CD8-positive, alpha-beta memory T cell (primary cell): ENCODE measurements at regions of chr11 and their contacts with region 1.

Region 1: GRCh38 chr11:60831143-60831500 is 10.8 kb upstream of the CCDC86 start:
- DNase-seq: peak; percentile 58 to 86 (median 71)
- H3K4me3 ChIP-seq: no peak overlapping the region
- H3K4me3 Mint-ChIP-seq: peak overlapping the region in 2 of 7 donors; percentile 54 to 83
- H3K27ac ChIP-seq: no peak overlapping the region
- H3K27ac Mint-ChIP-seq: peak overlapping the region in 3 of 8 donors; percentile 58 to 86 (median 60)
- H3K4me1 ChIP-seq: no peaks in the 10 kb centered on the region
- H3K4me1 Mint-ChIP-seq: peaks cover 0 to 3% (median 0%) of the 10 kb centered on the region in 3 donors
- H3K27me3 ChIP-seq: no peaks in the 10 kb centered on the region
- H3K27me3 Mint-ChIP-seq: peaks cover 12 to 29% of the 10 kb centered on the region in 2 donors

Region 2: DNA sequence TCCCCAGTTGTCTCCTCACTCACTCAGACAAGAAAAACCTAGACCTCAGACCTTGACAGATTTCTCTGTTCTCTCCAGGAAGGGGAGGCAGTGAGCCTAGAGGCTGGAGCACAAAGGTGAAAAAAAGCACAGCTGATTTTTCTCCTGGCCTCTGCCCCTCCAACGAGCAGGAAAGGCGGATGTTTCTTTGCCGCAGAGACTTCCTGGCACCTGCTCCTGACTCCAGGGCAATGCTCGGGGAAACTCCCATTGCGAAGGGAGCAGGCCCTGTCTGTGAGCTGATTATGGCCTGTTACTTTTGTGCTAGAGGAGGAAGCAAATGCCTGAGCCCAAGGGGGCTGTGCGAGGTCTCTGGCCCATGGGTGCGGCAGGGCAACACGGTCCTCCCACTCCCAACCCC is 20.6 kb before region 1 on chr11:
- CTCF ChIA-PET with region 1: no interaction called
- POLR2A ChIA-PET with region 1: no interaction called
- DNase-seq: no peak
- H3K4me3 ChIP-seq: no peak overlapping the region
- H3K4me3 Mint-ChIP-seq: no peak overlapping the region
- H3K27ac ChIP-seq: no peak overlapping the region
- H3K27ac Mint-ChIP-seq: no peak overlapping the region
- H3K4me1 ChIP-seq: no peaks in the 10 kb centered on the region
- H3K4me1 Mint-ChIP-seq: no peaks in the 10 kb centered on the region
- H3K27me3 ChIP-seq: no peaks in the 10 kb centered on the region
- H3K27me3 Mint-ChIP-seq: peaks cover 10 to 43% of the 10 kb centered on the region in 2 donors

Region 3: GRCh38 chr11:60860943-60861342 is 29.8 kb after region 1 on chr11:
- CTCF ChIA-PET with region 1: no interaction called
- POLR2A ChIA-PET with region 1: no interaction called
- DNase-seq: peak in 1 of 5 donors; percentile 33
- H3K4me3 ChIP-seq: no peak overlapping the region
- H3K4me3 Mint-ChIP-seq: no peak overlapping the region
- H3K27ac ChIP-seq: no peak overlapping the region
- H3K27ac Mint-ChIP-seq: peak overlapping the region in 1 of 8 donors; percentile 8
- H3K4me1 ChIP-seq: peaks cover 9% of the 10 kb centered on the region
- H3K4me1 Mint-ChIP-seq: peaks cover 14 to 39% (median 36%) of the 10 kb centered on the region in 3 donors
- H3K27me3 ChIP-seq: no peaks in the 10 kb centered on the region
- H3K27me3 Mint-ChIP-seq: no peaks in the 10 kb centered on the region

Region 4: GRCh38 chr11:60872961-60873524 is 41.9 kb after region 1 on chr11:
- CTCF ChIA-PET with region 1: interaction called, 10 read pairs
- POLR2A ChIA-PET with region 1: no interaction called
- DNase-seq: no peak
- H3K4me3 ChIP-seq: no peak overlapping the region
- H3K4me3 Mint-ChIP-seq: peak overlapping the region in 1 of 7 donors; percentile 56
- H3K27ac ChIP-seq: no peak overlapping the region
- H3K27ac Mint-ChIP-seq: peak overlapping the region in 5 of 8 donors; percentile 42 to 77 (median 51)
- H3K4me1 ChIP-seq: peaks cover 29% of the 10 kb centered on the region
- H3K4me1 Mint-ChIP-seq: peaks cover 19 to 53% (median 42%) of the 10 kb centered on the region in 3 donors
- H3K27me3 ChIP-seq: no peaks in the 10 kb centered on the region
- H3K27me3 Mint-ChIP-seq: peaks cover 1 to 8% of the 10 kb centered on the region in 2 donors

Region 5: GRCh38 chr11:60899046-60899936 is 68.2 kb after region 1 on chr11:
- CTCF ChIA-PET with region 1: interaction called, 20 read pairs
- POLR2A ChIA-PET with region 1: no interaction called
- DNase-seq: peak in 4 of 5 donors; percentile 10 to 56 (median 36)
- H3K4me3 ChIP-seq: no peak overlapping the region
- H3K4me3 Mint-ChIP-seq: peak overlapping the region in 1 of 7 donors; percentile 15
- H3K27ac ChIP-seq: no peak overlapping the region
- H3K27ac Mint-ChIP-seq: peak overlapping the region in 5 of 8 donors; percentile 23 to 61 (median 38)
- H3K4me1 ChIP-seq: peaks cover 8% of the 10 kb centered on the region
- H3K4me1 Mint-ChIP-seq: peaks cover 9 to 21% (median 10%) of the 10 kb centered on the region in 3 donors
- H3K27me3 ChIP-seq: no peaks in the 10 kb centered on the region
- H3K27me3 Mint-ChIP-seq: no peaks in the 10 kb centered on the region

Region 6: DNA sequence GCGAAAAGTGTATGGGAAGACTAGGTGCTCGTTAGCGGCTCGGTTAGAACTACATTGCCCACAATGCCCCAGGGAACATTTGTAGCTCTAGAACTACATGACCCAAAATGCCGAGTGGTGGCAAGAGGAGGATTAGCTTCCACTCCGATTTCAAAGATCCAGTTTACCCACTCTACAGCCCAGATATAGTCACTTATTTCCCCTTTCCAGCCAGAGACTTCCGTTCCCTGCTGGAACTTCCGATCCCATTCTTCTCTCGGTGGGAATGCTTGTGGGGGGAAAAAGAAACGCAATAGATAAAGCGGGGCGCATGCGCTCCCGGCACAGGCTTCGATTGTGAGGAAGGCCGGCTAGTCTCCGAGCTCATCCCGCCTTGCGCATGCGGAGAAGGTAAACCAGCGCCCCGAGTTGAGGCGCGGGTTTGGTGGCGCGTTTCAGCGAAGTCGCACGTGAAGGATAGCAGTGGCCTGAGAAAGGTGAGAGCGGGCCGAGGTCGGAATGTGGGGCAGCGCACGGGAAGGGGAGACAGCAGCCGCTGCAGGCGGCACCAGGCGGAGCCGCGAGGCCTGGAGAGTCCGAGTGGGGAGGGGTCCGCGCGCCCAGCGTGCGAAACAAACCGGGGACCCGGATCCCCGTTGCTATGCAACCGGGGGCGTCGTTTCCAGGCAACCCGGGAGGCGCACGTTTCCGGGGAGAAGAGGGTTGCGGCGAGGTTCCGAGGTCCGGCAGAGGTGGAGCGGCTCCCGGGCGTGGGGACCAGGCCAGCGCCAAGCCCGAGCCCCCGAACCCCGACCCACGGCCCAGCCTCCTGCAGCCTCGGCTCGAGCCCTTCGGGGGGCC is 82.9 kb after region 1 on chr11 and contains the start of gene TMEM109:
- CTCF ChIA-PET with region 1: interaction called, 10 read pairs
- POLR2A ChIA-PET with region 1: no interaction called
- DNase-seq: peak; percentile 82 to 92 (median 88)
- H3K4me3 ChIP-seq: peak within 1 kb of the TSS; percentile 91
- H3K4me3 Mint-ChIP-seq: peak within 1 kb of the TSS; percentile 93 to 99 (median 97)
- H3K27ac ChIP-seq: peak within 1 kb of the TSS; percentile 82
- H3K27ac Mint-ChIP-seq: peak within 1 kb of the TSS; percentile 95 to 99 (median 98)
- H3K4me1 ChIP-seq: peaks cover 47% of the 10 kb centered on the region
- H3K4me1 Mint-ChIP-seq: peaks cover 59 to 81% (median 63%) of the 10 kb centered on the region in 3 donors
- H3K27me3 ChIP-seq: no peaks in the 10 kb centered on the region
- H3K27me3 Mint-ChIP-seq: no peaks in the 10 kb centered on the region
- total RNA-seq, gene TMEM109: 144 to 147 TPM

Region 7: DNA sequence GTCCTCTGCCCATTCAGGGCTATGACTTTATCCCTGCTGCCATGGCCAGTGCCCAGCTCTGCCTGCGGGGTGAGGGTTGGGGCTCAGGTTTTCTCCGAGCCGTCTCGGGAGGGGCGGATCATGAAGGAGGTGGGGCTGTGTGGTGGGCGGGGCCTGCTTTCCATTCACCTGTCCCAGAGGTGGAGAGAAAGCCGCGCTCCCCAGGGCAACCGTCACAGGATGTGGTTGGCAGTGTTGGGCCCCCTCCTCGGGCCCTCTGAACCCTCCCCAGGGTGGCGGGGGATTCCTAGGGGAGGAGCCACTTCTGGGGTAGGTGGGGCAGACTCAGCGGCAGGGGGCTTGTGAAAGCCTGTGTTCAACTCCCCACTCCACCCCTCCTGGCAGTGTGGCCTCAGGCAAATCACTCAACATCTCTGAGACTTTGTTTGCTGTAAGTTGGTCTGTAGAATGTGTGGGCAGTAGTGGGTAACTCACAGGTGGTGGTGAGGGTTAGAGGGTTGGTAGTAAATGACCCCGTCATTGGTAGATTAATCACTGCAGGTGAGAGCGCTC is 190.6 kb after region 1 on chr11:
- CTCF ChIA-PET with region 1: no interaction called
- POLR2A ChIA-PET with region 1: no interaction called
- DNase-seq: peak; percentile 82 to 94 (median 89)
- H3K4me3 ChIP-seq: peak overlapping the region; percentile 60
- H3K4me3 Mint-ChIP-seq: peak overlapping the region; percentile 9 to 83 (median 77)
- H3K27ac ChIP-seq: peak overlapping the region; percentile 40
- H3K27ac Mint-ChIP-seq: peak overlapping the region; percentile 94 to 99 (median 98)
- H3K4me1 ChIP-seq: peaks cover 64% of the 10 kb centered on the region
- H3K4me1 Mint-ChIP-seq: peaks cover 61 to 87% (median 67%) of the 10 kb centered on the region in 3 donors
- H3K27me3 ChIP-seq: no peaks in the 10 kb centered on the region
- H3K27me3 Mint-ChIP-seq: peaks cover 0 to 1% of the 10 kb centered on the region in 2 donors